Dendritic cell treated with granulocyte-macrophage colony-stimulating factor and Interleukin-4, amounts not matched to agents 40 ng/mL and 50 ng/mL, for 4 days (primary cell): ENCODE measurements at regions of chr4 and their contacts with region 1.

Region 1: GRCh38 chr4:140012688-140013486 is 141.1 kb downstream of the MAML3 start:
- H3K4me3 Mint-ChIP-seq: no peak overlapping the region
- H3K27ac Mint-ChIP-seq: no peak overlapping the region
- H3K4me1 Mint-ChIP-seq: peaks cover 12% of the 10 kb centered on the region
- H3K27me3 Mint-ChIP-seq: no peaks in the 10 kb centered on the region

Region 2: GRCh38 chr4:139734875-139735380 is 278.0 kb before region 1 on chr4:
- intact Hi-C with region 1: loop called (anchors 2 kb)
- H3K4me3 Mint-ChIP-seq: peak overlapping the region; percentile 71
- H3K27ac Mint-ChIP-seq: peak overlapping the region; percentile 49
- H3K4me1 Mint-ChIP-seq: peaks cover 40% of the 10 kb centered on the region
- H3K27me3 Mint-ChIP-seq: peaks cover 10% of the 10 kb centered on the region

Region 3: DNA sequence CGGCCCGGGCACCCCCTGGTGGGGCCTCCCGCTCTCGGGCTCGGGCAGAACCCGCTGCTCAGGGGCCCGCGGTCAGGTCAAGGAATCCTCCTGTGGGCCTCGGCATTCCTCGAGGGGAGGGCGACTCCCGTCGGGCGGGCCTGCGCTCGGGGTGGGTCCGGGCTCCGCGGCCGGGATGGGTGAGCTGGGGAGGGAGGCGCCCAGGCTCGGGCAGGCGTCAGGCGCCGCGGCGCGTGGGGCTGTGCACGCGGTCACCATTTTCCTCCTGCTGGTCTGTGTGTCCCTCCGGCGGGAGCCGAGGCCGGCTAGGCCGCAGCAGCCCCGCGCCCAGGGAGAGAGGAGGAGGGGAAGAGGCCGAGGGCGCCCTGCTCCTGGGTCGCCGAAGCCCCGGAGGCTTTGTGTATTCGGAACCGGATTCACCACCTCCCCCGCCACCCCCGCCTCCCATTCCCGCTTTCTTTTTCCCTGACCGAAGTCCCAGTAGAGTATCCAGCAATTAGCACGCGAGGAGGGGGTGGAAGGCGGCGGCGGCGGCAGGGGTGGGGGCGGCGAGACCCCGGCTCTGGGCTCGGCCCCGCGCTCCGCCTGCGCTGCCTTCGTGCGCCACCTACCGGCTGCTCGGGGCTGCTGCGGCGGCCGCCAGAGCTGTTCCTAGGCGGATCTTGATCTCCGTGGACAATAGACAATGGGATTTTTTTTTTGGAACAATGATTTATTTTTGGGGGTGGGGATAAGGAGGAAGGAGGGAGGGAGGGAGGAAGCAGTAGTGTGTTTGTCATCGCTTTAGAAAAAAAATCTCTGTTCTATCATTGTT is 240.1 kb after region 1 on chr4:
- intact Hi-C with region 1: loop called (anchors 1 kb)
- H3K4me3 Mint-ChIP-seq: peak overlapping the region; percentile 70
- H3K27ac Mint-ChIP-seq: peak overlapping the region; percentile 65
- H3K4me1 Mint-ChIP-seq: peaks cover 28% of the 10 kb centered on the region
- H3K27me3 Mint-ChIP-seq: peaks cover 11% of the 10 kb centered on the region

Region 4: GRCh38 chr4:140326395-140326993 is 313.6 kb after region 1 on chr4:
- intact Hi-C with region 1: loop called (anchors 10 kb)
- H3K4me3 Mint-ChIP-seq: no peak overlapping the region
- H3K27ac Mint-ChIP-seq: no peak overlapping the region
- H3K4me1 Mint-ChIP-seq: peaks cover 9% of the 10 kb centered on the region
- H3K27me3 Mint-ChIP-seq: peaks cover 2% of the 10 kb centered on the region

Region 5: DNA sequence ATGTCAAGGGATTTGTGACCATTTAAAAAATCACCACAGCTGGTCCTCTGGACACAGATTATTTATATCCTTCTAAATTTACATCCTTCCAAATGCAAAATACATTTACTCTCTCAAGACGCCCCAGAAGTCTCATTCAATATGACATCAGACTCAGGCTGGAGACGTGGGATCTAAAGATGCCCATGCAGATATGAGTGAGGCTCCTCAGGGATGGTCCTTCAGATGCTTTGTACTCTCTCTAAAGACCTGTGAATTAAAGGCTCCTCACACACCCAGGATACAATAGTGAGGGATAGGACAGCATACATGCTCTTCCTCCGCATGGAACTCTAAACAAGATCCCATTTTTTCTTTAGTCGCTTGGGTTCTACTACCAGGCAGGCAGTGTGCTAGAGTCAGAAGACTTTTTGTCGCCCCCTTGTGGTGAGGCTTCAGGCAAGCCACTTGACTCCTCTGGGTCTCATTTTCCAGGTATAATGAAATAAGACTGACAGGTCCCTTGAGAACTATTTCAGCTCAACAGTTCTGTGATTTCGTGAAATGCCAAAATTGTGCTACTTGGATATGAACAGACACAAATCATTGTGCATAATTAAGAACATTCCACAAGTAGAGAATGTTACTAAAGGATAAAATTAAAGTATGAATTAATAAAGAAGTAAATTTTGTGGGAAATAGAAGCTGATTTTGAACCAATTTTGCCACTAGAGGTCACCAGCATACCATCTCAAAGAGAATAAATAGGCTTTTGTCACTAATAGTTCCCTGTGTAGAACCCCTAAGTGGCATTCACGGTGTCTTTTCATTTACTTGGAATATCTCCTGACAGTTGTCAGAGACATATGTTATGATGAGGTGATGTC is 346.9 kb after region 1 on chr4:
- intact Hi-C with region 1: loop called (anchors 1 kb)
- H3K4me3 Mint-ChIP-seq: no peak overlapping the region
- H3K27ac Mint-ChIP-seq: no peak overlapping the region
- H3K4me1 Mint-ChIP-seq: no peaks in the 10 kb centered on the region
- H3K27me3 Mint-ChIP-seq: no peaks in the 10 kb centered on the region

Region 6: DNA sequence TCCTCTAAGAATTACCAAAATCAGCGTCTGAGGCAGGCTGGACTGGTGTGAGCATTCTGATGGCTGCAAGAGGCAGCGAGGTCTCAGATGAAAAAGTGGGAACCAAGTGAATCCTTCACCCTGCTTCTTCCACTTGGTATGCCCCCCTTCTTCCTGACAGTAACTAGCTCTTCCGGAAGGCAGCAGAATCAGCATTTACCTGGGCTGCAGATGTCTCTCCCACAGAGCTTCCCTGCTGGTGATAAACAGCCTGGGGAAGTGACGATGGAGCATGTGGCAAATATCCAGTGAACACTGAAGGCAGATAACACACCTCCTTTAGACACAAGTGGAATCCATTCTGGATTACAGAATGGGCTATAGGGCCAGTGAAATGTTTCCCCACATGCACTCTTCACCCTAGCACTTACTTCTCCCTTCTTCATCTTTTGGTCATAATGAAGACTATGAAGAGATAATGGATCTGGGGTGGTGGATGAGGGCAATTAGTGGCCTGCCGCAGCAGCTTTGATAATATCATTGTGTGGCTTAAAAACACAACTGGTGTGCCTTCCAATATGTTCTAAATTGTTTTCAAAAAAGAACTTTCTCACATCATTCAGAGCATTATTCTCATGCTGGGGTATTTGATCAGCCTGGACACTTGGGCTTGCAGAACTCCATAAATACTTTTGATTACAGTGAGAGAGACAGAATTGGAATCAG is 804.1 kb after region 1 on chr4:
- intact Hi-C with region 1: no loop called
- H3K4me3 Mint-ChIP-seq: no peak overlapping the region
- H3K27ac Mint-ChIP-seq: no peak overlapping the region
- H3K4me1 Mint-ChIP-seq: no peaks in the 10 kb centered on the region
- H3K27me3 Mint-ChIP-seq: peaks cover 8% of the 10 kb centered on the region